ENCODE measurements at regions of chr16 and their contacts with region 1.

Region 1: GRCh38 chr16:13919683-13920509 is at the start of gene ERCC4:
- DNase-seq: peak; percentile 99
- CTCF ChIP-seq: peak; percentile 80

Region 2: DNA sequence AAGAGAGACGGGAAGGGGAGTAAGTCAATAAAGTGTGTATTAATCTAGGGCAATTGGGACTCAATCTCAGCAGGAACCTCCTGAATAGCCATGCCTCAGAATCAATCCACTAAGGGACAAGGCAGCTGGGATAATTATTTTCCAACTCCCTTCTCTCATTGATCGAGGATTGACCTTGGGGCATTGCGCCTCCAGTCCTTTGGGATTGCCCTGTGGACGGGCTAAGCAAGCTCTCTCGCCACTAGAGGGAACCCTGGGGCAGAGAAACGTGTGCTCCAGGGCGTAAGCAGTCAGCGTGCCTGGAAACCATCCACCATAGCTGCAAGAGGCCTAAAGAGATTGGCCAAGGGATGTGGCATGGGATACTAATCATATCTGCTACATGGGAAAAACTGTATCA is 53.8 kb before region 1 on chr16:
- CTCF ChIA-PET with region 1: interaction called, 10 read pairs
- POLR2A ChIA-PET with region 1: no interaction called
- DNase-seq: peak; percentile 44
- CTCF ChIP-seq: peak; percentile 67

Region 3: GRCh38 chr16:13909872-13910303 is 10.0 kb before region 1 on chr16:
- CTCF ChIA-PET with region 1: interaction called, 43 read pairs
- POLR2A ChIA-PET with region 1: no interaction called
- DNase-seq: no peak
- CTCF ChIP-seq: no peak

Region 4: GRCh38 chr16:13940397-13940933 is 20.6 kb after region 1 on chr16:
- CTCF ChIA-PET with region 1: interaction called, 10 read pairs
- POLR2A ChIA-PET with region 1: no interaction called
- DNase-seq: no peak
- CTCF ChIP-seq: no peak

Region 5: GRCh38 chr16:14011846-14012245 is 92.0 kb after region 1 on chr16:
- CTCF ChIA-PET with region 1: no interaction called
- POLR2A ChIA-PET with region 1: no interaction called
- DNase-seq: no peak
- CTCF ChIP-seq: no peak

Region 6: DNA sequence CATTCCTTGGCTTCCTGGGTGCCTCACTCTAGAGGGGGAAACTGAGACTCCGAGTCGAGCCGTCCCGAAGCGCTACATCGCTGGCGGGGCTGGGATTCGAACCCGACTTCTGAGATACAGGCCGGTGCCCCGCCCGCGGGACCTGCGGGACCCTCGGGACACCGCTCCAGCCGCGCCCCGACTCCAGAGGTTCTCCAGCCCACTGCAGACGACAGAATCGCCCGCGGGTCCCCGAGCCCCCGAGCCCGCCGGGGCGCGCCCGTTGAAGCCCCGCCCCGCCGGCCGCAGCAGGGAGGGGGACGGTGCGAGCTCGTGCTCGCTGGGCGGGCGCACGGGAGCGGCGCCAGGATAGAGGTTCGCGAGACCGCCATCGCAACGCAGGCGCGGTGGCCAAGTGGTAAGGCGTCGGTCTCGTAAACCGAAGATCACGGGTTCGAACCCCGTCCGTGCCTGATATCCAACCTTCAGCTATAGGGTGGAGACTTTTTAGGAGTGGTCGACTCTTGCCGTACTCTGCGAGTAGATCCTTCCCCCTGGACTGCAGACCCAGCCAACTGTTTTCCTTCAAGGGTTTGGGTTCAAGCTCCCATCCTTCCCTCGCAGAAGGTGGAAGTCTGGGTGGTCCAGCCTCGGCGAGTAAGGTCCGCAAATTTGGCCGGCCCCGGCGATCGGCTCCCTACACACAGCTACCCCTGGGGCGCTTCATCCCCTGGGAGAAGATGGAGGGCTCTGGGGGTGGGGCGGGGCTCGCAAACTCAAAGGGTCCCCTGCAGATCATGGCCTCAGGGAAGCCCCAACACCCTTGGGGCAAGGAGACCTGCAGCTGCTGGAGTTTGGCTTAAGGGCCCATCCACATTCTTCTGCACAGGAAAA is 365.9 kb after region 1 on chr16:
- CTCF ChIA-PET with region 1: interaction called, 21 read pairs
- POLR2A ChIA-PET with region 1: interaction called, 3 read pairs
- DNase-seq: peak; percentile 95
- CTCF ChIP-seq: no peak

Region 7: GRCh38 chr16:14529010-14529669 is 609.2 kb after region 1 on chr16:
- CTCF ChIA-PET with region 1: interaction called, 11 read pairs
- POLR2A ChIA-PET with region 1: no interaction called
- DNase-seq: peak; percentile 64
- CTCF ChIP-seq: peak; percentile 76

Region 8: DNA sequence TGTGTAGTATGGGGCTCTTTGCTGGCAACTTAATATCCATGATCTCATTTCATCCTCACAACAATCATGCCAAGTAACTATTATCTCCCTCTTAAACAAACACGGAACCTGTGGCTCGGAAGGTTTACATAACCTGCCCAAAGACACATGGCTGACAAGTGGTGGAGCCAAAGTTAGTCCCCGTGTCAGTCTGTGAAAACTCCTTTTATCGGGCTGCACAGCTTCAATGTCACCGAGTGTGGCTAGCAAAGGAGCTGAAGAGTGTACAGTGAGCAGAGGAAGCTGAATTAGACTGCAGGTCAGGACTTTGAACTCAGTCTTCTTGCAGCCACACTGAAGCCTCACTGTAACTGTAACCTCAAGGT is 629.9 kb after region 1 on chr16:
- CTCF ChIA-PET with region 1: no interaction called
- POLR2A ChIA-PET with region 1: no interaction called
- DNase-seq: no peak
- CTCF ChIP-seq: no peak